IMR-90 (cell line): ENCODE measurements at regions of chr9 and their contacts with region 1.

Region 1: DNA sequence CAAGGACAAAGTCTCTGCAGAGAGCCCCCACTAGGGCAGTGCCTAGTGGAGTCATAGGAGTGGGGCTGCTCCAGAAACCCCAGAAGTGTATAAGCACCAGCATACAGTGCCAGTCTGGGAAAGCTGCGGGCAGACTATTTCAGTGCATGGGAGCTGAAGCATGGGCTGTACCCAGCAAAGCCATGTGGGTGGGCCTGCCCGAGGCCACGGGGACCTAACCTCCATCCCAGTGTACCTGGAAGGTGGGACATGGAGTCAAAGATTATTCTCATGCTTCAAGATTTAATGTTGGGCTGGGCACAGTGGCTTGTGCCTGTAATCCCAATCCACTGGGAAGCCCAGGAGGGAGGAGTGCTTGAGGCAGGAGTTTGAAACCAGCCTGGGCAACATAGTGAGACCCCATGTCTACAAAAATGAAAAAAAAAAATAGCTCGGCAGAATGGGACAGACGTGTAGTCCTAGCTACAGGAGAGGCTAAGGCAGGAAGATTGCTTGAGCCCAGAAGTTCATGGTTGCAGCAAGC is 36.7 kb downstream of the PTPDC1 start:
- DNase-seq: no peak
- ATAC-seq: no peak
- H3K4me3 ChIP-seq: no peak overlapping the region
- H3K27ac ChIP-seq: no peak overlapping the region
- H3K4me1 ChIP-seq: no peaks in the 10 kb centered on the region
- H3K27me3 ChIP-seq: no peaks in the 10 kb centered on the region
- CTCF ChIP-seq: no peak
- POLR2A ChIP-seq: no peak
- RAD21 ChIP-seq: no peak

Region 2: GRCh38 chr9:94097788-94098414 is 23.0 kb before region 1 on chr9:
- CTCF ChIA-PET with region 1: no interaction called
- POLR2A ChIA-PET with region 1: no interaction called
- dilution Hi-C with region 1: no loop called
- in situ Hi-C with region 1: no loop called
- intact Hi-C with region 1: loop called (anchors 2 kb)
- DNase-seq: peak; percentile 95
- ATAC-seq: peak; percentile 98
- H3K4me3 ChIP-seq: no peak overlapping the region
- H3K27ac ChIP-seq: no peak overlapping the region; the same call in 1 of the 2 replicates
- H3K4me1 ChIP-seq: peaks cover 4% of the 10 kb centered on the region; the same call in 1 of the 2 replicates
- H3K27me3 ChIP-seq: no peaks in the 10 kb centered on the region
- CTCF ChIP-seq: no peak
- POLR2A ChIP-seq: no peak
- RAD21 ChIP-seq: no peak

Region 3: GRCh38 chr9:94150890-94151650 is 30.2 kb after region 1 on chr9:
- CTCF ChIA-PET with region 1: no interaction called
- POLR2A ChIA-PET with region 1: no interaction called
- dilution Hi-C with region 1: no loop called
- in situ Hi-C with region 1: no loop called
- intact Hi-C with region 1: no loop called
- DNase-seq: no peak
- ATAC-seq: no peak; the same call in 1 of the 2 replicates
- H3K4me3 ChIP-seq: no peak overlapping the region
- H3K27ac ChIP-seq: no peak overlapping the region
- H3K4me1 ChIP-seq: peaks cover 5% of the 10 kb centered on the region; the same call in 1 of the 2 replicates
- H3K27me3 ChIP-seq: no peaks in the 10 kb centered on the region
- CTCF ChIP-seq: no peak
- POLR2A ChIP-seq: no peak
- RAD21 ChIP-seq: no peak